ENCODE measurements at regions of chrX and their contacts with region 1.

Region 1: DNA sequence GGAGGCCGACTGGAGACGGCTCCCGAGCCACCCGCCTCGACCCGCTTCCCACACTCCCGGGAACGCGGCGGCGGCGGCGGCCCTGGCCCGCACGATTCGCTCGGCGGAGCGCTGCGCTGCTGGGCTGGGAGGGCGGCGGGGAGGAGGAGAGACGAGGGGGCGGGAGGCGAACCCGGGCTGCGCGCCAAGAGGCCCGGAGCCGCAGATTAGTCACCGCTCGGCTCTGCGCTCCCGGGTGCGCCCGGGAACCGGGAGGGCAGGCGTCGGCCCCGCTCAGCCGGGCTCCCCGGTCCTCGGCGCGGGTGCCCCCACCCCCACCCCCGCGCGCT is 11.2 kb upstream of the BCOR start:
- DNase-seq: peak in 39 of 42 donors; percentile 46 to 91 (median 78)

Region 2: GRCh38 chrX:40153335-40154249 is 44.7 kb after region 1 on chrX:
- intact Hi-C with region 1: loop called (anchors 5 kb)
- DNase-seq: peak in 36 of 42 donors; percentile 40 to 84 (median 64)

Region 3: DNA sequence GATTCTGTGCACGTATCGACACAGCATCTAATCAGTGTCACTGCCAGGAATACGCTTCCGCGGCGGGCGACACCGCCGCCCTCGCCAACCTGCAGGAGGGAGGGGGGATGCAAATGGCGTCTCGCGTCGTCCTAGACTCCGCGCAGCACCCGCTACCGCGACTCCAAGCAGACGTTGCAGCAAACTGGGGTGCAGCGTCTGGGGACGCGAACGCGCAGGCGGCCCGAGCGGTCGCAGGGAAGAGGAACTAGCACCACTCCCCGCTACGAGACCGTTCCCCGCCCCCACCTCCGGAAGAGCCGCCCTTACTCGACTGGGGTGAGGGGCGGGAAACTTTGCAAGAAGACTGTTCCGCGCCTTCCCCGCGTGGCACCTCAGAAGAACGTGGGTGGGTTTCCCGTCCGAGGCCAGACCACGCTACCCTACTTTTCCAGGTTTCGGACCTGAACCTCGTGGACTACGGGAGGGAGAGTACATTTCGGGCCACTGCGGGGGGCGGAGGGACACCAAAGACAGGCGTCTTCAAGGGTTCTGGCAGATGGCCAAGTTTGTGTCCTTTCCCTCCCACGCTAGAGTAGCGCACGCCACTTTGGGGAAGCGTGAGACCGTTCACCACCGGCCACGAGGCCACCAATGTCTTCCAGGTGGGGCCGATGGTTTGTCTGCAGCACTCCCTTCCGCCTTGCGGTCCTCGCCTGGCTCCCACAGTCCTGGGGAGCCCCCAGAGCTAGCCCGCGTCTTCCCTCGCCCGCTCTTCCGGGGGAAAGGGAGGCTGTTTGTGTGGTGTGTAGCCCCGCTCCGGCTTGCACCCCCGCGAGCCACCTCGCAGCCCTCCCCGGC is 66.8 kb after region 1 on chrX:
- intact Hi-C with region 1: loop called (anchors 5 kb)
- DNase-seq: peak in 37 of 42 donors; percentile 42 to 79 (median 60)

Measured in head of caudate nucleus (tissue), 42 donors.